IMR-90 (cell line): ENCODE measurements at regions of chr6 and their contacts with region 1.

Region 1: GRCh38 chr6:116969211-116969863 is 92.3 kb downstream of the RFX6 start:
- DNase-seq: peak; percentile 50
- ATAC-seq: peak; percentile 72
- H3K4me3 ChIP-seq: no peak overlapping the region
- H3K27ac ChIP-seq: no peak overlapping the region
- H3K4me1 ChIP-seq: no peaks in the 10 kb centered on the region
- H3K27me3 ChIP-seq: no peaks in the 10 kb centered on the region
- CTCF ChIP-seq: peak; percentile 66
- POLR2A ChIP-seq: no peak
- RAD21 ChIP-seq: peak; percentile 40; the same call in 1 of the 2 replicates

Region 2: GRCh38 chr6:116697480-116697879 is 271.9 kb before region 1 on chr6:
- CTCF ChIA-PET with region 1: no interaction called
- POLR2A ChIA-PET with region 1: no interaction called
- dilution Hi-C with region 1: no loop called
- in situ Hi-C with region 1: no loop called
- intact Hi-C with region 1: no loop called
- DNase-seq: no peak
- ATAC-seq: no peak
- H3K4me3 ChIP-seq: no peak overlapping the region
- H3K27ac ChIP-seq: no peak overlapping the region
- H3K4me1 ChIP-seq: no peaks in the 10 kb centered on the region
- H3K27me3 ChIP-seq: no peaks in the 10 kb centered on the region
- CTCF ChIP-seq: no peak
- POLR2A ChIP-seq: no peak
- RAD21 ChIP-seq: no peak

Region 3: GRCh38 chr6:116779573-116780164 is 189.7 kb before region 1 on chr6:
- CTCF ChIA-PET with region 1: interaction called, 9 read pairs
- POLR2A ChIA-PET with region 1: no interaction called
- dilution Hi-C with region 1: no loop called
- in situ Hi-C with region 1: no loop called
- intact Hi-C with region 1: loop called (anchors 2 kb)
- DNase-seq: peak; percentile 36
- ATAC-seq: peak; percentile 67; the same call in 1 of the 2 replicates
- H3K4me3 ChIP-seq: no peak overlapping the region
- H3K27ac ChIP-seq: no peak overlapping the region
- H3K4me1 ChIP-seq: no peaks in the 10 kb centered on the region
- H3K27me3 ChIP-seq: no peaks in the 10 kb centered on the region
- CTCF ChIP-seq: peak; percentile 46
- POLR2A ChIP-seq: no peak
- RAD21 ChIP-seq: no peak; the same call in 1 of the 2 replicates

Region 4: GRCh38 chr6:116881236-116881635 is 88.1 kb before region 1 on chr6:
- CTCF ChIA-PET with region 1: no interaction called
- POLR2A ChIA-PET with region 1: no interaction called
- dilution Hi-C with region 1: no loop called
- in situ Hi-C with region 1: no loop called
- intact Hi-C with region 1: loop called (anchors 5 kb)
- DNase-seq: no peak
- ATAC-seq: no peak
- H3K4me3 ChIP-seq: no peak overlapping the region
- H3K27ac ChIP-seq: no peak overlapping the region
- H3K4me1 ChIP-seq: no peaks in the 10 kb centered on the region
- H3K27me3 ChIP-seq: peaks cover 14% of the 10 kb centered on the region
- CTCF ChIP-seq: 0 out of 2 replicates have a peak, but pooled peaks have one; percentile 3
- POLR2A ChIP-seq: no peak
- RAD21 ChIP-seq: no peak

Region 5: DNA sequence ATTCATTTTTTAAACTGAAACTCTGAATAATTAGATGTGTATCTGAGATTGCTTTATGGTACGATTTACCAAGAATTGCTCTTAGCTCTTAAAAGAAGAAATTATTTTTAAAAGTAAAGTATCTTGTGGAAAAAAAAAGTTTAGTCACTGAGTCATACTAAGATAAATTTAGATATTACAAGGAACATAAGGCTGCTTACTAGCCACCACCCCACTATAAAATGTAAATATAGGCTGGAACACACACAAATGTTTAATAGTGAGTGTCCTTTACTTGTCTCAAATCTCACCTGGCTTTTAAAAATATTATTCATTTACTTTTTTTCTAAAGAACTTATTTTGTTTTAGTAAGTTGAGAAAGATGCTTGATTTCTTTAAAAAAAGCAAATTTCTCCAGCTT is 74.7 kb before region 1 on chr6:
- CTCF ChIA-PET with region 1: no interaction called
- POLR2A ChIA-PET with region 1: no interaction called
- dilution Hi-C with region 1: no loop called
- in situ Hi-C with region 1: no loop called
- intact Hi-C with region 1: no loop called
- DNase-seq: no peak
- ATAC-seq: no peak
- H3K4me3 ChIP-seq: no peak overlapping the region
- H3K27ac ChIP-seq: no peak overlapping the region
- H3K4me1 ChIP-seq: no peaks in the 10 kb centered on the region
- H3K27me3 ChIP-seq: no peaks in the 10 kb centered on the region
- CTCF ChIP-seq: no peak
- POLR2A ChIP-seq: no peak
- RAD21 ChIP-seq: no peak

Region 6: GRCh38 chr6:117317261-117317660 is 347.9 kb after region 1 on chr6:
- CTCF ChIA-PET with region 1: no interaction called
- POLR2A ChIA-PET with region 1: no interaction called
- dilution Hi-C with region 1: no loop called
- in situ Hi-C with region 1: no loop called
- intact Hi-C with region 1: loop called (anchors 5 kb)
- DNase-seq: peak; percentile 6
- ATAC-seq: no peak
- H3K4me3 ChIP-seq: no peak overlapping the region
- H3K27ac ChIP-seq: no peak overlapping the region
- H3K4me1 ChIP-seq: no peaks in the 10 kb centered on the region
- H3K27me3 ChIP-seq: no peaks in the 10 kb centered on the region
- CTCF ChIP-seq: 0 out of 2 replicates have a peak, but pooled peaks have one; percentile 26
- POLR2A ChIP-seq: no peak
- RAD21 ChIP-seq: peak; percentile 15; the same call in 1 of the 2 replicates

Region 7: DNA sequence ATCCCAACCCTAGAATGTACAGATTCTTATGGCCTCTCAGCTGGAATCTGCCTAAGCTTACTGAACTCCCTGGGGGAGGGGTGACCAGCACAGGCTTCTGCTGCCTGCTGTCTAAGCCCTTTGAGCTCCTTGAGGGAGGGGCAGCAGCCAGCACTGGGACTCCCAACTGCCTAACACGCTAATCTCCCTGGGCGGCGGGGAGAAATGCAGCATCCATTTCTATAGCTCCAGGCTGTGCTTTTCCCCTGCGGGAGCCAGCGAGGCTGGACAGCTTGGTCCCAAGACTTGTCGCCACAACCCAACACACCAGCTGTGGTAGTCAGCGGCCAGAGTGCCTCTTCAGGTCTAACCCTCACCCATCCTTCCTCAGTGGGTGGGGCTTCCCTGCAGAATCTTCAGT is 360.5 kb after region 1 on chr6:
- CTCF ChIA-PET with region 1: no interaction called
- POLR2A ChIA-PET with region 1: no interaction called
- dilution Hi-C with region 1: no loop called
- in situ Hi-C with region 1: no loop called
- intact Hi-C with region 1: no loop called
- DNase-seq: no peak
- ATAC-seq: no peak
- H3K4me3 ChIP-seq: no peak overlapping the region
- H3K27ac ChIP-seq: no peak overlapping the region
- H3K4me1 ChIP-seq: no peaks in the 10 kb centered on the region
- H3K27me3 ChIP-seq: no peaks in the 10 kb centered on the region
- CTCF ChIP-seq: no peak
- POLR2A ChIP-seq: no peak
- RAD21 ChIP-seq: no peak

Region 8: DNA sequence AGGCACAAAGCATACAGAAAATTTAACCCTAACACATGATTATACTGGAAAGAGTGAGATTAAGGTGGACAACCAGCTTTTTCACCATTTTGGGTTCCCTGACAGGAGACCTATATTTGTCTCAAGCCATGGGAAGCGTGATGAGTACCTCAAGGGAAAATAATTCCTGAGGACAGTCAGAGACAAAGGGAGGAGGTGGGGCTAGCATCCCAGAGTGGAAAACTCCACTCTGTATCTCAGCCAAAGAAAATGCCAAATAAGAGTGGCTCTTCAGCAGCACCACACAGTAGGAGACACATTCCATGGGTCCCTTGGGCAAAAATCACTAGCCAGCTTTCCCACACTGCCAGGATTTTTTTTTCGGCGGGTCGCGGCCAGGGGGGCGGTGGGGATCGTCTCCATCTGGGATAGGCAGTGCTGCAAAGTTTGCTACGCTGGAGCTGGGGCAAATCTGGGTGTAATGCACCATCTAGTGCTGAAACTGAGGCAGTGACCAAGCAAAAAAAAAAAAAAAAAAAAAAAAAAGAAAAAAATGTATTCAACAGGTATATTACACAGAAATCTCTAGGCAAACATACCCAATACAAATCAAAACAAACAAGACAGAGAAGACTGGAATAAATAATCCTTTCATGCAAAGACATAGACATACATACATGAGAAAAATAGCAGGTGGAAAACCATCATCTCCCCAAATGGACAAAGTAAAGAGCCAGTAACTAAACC is 860.4 kb after region 1 on chr6:
- CTCF ChIA-PET with region 1: no interaction called
- POLR2A ChIA-PET with region 1: no interaction called
- dilution Hi-C with region 1: no loop called
- in situ Hi-C with region 1: no loop called
- intact Hi-C with region 1: loop called (anchors 5 kb)
- DNase-seq: peak; percentile 30
- ATAC-seq: peak; percentile 57
- H3K4me3 ChIP-seq: peak overlapping the region; percentile 48
- H3K27ac ChIP-seq: no peak overlapping the region
- H3K4me1 ChIP-seq: no peaks in the 10 kb centered on the region
- H3K27me3 ChIP-seq: no peaks in the 10 kb centered on the region
- CTCF ChIP-seq: peak; percentile 56
- POLR2A ChIP-seq: no peak
- RAD21 ChIP-seq: peak; percentile 61